Right ventricle myocardium inferior (tissue), 1 donor: ENCODE measurements at regions of chr22 and their contacts with region 1.

Region 1: DNA sequence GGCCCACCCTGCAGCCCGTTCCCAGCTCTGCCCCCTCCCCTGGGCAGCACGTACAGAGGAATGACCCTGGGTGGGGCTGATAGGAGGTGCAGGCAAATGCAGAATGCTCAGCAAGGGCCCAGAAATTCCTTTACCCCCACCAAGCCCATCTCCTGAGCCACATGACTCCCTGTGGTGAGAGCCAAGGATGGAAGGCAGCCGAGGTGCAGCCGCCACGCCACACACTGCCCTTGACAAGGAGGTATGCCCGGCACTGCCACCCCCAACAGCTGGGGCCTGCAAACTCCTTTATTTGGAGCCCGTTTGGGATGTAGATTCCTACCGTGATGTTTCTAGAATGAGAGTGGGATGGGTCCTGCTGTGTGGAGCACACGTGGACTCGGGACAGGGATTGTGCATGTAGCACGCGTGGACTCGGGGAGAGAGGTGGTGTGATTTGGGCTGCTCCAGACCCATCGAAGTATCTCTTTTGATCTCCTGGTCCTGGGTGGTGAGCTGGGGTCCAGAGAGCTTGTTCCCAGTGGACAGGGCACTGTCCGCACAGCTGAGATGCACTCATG is 12.9 kb downstream of the GTSE1 start:
- DNase-seq: no peak
- ATAC-seq: peak; percentile 75

Region 2: DNA sequence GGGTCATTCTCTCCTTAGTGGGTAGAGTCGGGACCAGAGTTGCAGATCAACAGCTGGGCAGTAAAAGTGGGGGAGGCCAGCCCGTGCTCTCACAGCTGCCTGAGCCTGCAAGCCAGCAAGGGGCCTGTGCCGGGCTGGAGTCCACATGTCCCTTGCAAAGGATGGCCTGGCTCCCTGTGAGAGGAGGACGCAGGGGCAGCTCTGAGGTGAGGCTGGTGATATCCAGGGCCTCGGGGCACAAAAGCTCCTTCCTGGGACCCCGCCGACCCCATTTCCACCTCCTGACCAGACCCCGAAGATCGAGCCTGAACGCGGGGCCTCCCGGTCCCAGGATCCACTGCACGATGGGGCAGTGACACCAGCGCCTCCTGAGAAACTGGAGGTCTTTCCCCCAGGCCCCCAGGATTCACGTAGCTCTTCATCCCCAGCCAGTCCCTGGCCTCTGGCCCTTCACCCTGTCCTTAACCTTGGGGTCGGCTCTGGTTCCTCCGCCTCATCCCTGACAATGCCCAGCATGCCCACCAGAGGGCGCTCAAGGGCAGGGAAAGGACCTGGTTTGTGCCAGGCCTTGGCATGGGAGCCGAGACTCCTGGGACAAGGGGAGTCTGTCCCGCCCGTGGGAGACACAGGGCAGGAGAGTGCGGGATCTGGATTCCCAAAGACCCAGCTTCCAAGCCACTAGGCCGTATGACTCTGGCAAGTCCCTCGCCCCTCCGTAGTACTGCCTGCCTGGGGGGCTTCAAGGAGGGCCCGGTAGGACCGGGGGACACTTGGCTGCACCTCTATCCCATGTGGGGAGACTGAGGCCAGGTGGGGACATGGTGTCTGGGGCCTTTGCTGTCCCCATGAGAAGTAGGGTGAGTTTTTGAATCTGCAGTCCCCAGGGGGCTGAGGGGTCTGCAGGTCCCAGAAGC is 314.9 kb before region 1 on chr22:
- intact Hi-C with region 1: loop called (anchors 5 kb)
- DNase-seq: peak; percentile 93
- ATAC-seq: peak; percentile 52

Region 3: GRCh38 chr22:46122511-46122971 is 187.1 kb before region 1 on chr22:
- intact Hi-C with region 1: loop called (anchors 1 kb)
- DNase-seq: peak; percentile 90
- ATAC-seq: peak; percentile 57